ENCODE measurements at regions of chr15 and their contacts with region 1.

Region 1: GRCh38 chr15:41568350-41569017 is 9.5 kb downstream of the TYRO3 start:
- DNase-seq: peak; percentile 89
- ATAC-seq: peak; percentile 78
- H3K4me3 Mint-ChIP-seq: peak overlapping the region; percentile 41
- H3K27ac Mint-ChIP-seq: peak overlapping the region; percentile 95
- H3K4me1 Mint-ChIP-seq: peaks cover 62% of the 10 kb centered on the region
- H3K27me3 Mint-ChIP-seq: no peaks in the 10 kb centered on the region
- CTCF ChIP-seq: no peak

Region 2: DNA sequence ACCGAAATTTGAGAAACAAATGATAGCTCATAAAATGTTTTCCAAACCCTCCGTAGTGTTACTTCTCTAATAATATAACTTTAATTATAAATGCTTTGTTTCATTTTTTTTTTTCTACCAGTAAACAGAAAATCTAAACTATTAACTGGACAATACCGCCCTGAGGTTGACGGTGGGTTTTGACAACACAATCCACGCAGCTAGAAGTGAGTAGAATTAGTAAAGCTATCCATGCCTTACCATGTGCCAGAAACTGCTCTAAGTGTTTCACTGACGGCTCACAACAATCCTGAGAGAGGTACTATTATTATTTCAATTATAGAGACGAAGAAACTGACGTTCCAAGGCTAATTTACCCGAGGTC is 166.6 kb before region 1 on chr15:
- CTCF ChIA-PET with region 1: no interaction called
- POLR2A ChIA-PET with region 1: no interaction called
- DNase-seq: no peak
- ATAC-seq: no peak
- H3K4me3 Mint-ChIP-seq: peak overlapping the region; percentile 82
- H3K27ac Mint-ChIP-seq: peak overlapping the region; percentile 69
- H3K4me1 Mint-ChIP-seq: peaks cover 2% of the 10 kb centered on the region; the same call in 1 of the 2 replicates
- H3K27me3 Mint-ChIP-seq: no peaks in the 10 kb centered on the region
- CTCF ChIP-seq: no peak

Region 3: DNA sequence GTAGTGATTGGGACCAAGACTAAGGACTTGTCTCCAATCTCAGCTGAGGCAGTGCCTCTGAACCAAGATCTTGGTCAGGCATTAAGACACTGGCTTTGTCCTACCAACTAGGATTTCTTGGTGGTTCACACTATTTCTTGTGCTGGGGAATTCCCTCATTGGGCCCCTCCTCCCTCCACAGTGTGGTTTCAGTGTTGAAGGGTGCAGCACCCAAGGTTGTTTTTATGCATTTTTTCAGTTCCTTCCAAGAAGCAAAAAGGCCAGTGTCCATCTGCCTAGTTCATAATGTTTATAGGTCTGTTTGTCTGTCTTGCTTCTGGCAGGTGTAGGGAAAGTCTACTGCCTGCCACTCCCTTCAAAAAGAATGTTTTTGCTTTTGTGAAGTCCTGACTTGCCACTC is 85.4 kb before region 1 on chr15:
- CTCF ChIA-PET with region 1: no interaction called
- POLR2A ChIA-PET with region 1: no interaction called
- DNase-seq: no peak
- ATAC-seq: no peak
- H3K4me3 Mint-ChIP-seq: no peak overlapping the region
- H3K27ac Mint-ChIP-seq: no peak overlapping the region
- H3K4me1 Mint-ChIP-seq: no peaks in the 10 kb centered on the region
- H3K27me3 Mint-ChIP-seq: no peaks in the 10 kb centered on the region; the same call in 1 of the 2 replicates
- CTCF ChIP-seq: no peak

Region 4: GRCh38 chr15:41585127-41586047 is 16.9 kb after region 1 on chr15:
- CTCF ChIA-PET with region 1: interaction called, 121 read pairs
- POLR2A ChIA-PET with region 1: interaction called, 19 read pairs
- DNase-seq: peak; percentile 35
- ATAC-seq: peak; percentile 67
- H3K4me3 Mint-ChIP-seq: peak overlapping the region; percentile 68
- H3K27ac Mint-ChIP-seq: no peak overlapping the region
- H3K4me1 Mint-ChIP-seq: peaks cover 16% of the 10 kb centered on the region
- H3K27me3 Mint-ChIP-seq: peaks cover 16% of the 10 kb centered on the region
- CTCF ChIP-seq: no peak